WTC11 (cell line): ENCODE measurements at regions of chr12 and their contacts with region 1.

Region 1: DNA sequence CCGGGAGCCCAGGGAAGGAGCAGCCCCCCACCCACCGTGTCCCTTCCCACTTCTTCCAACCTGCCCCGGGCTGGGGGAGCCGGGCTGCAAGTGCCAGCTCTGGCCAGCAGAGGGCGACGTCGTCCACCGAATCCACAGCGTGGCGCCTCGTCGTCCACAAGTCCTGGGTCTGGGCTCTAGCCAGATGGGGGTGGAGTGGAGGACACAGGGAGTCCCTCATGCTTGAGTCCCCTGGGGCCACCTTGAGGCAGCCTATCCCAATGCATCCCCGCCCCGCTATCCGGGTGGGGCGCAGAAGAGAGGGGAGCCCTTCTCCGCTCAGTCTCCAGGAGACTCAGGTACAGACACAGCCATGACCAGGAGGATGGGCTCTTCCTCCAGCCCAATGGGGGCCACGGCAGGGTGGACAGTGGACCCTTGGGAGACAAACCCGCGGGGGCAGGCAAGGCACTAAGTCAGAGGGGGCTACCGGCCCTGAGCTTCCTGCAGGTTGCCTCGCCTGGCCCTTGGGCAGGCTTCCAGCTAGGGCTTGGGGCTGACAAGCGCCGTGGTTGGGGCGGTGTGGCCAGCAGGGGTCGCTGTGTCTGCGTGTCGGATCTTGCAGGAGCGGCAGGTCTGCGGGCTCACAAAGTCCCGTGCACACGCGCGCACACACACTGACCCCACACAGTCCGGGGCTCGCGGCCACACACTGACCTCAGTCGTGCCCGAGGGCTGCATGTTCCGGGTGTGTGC is 5.5 kb downstream of the AQP5 start:
- DNase-seq: peak; percentile 95
- ATAC-seq: peak; percentile 76
- H3K4me3 Mint-ChIP-seq: peak overlapping the region; percentile 59
- H3K27ac Mint-ChIP-seq: no peak overlapping the region
- H3K4me1 Mint-ChIP-seq: peaks cover 10% of the 10 kb centered on the region
- H3K27me3 Mint-ChIP-seq: peaks cover 33% of the 10 kb centered on the region
- CTCF ChIP-seq: peak; percentile 91

Region 2: GRCh38 chr12:49730050-49730449 is 237.2 kb before region 1 on chr12:
- CTCF ChIA-PET with region 1: no interaction called
- POLR2A ChIA-PET with region 1: no interaction called
- DNase-seq: no peak
- ATAC-seq: no peak
- H3K4me3 Mint-ChIP-seq: no peak overlapping the region
- H3K27ac Mint-ChIP-seq: no peak overlapping the region
- H3K4me1 Mint-ChIP-seq: no peaks in the 10 kb centered on the region
- H3K27me3 Mint-ChIP-seq: peaks cover 15% of the 10 kb centered on the region
- CTCF ChIP-seq: no peak

Region 3: GRCh38 chr12:49882851-49883470 is 84.2 kb before region 1 on chr12:
- CTCF ChIA-PET with region 1: interaction called, 16 read pairs
- POLR2A ChIA-PET with region 1: no interaction called
- DNase-seq: peak; percentile 46
- ATAC-seq: peak; percentile 70
- H3K4me3 Mint-ChIP-seq: no peak overlapping the region
- H3K27ac Mint-ChIP-seq: no peak overlapping the region
- H3K4me1 Mint-ChIP-seq: peaks cover 43% of the 10 kb centered on the region
- H3K27me3 Mint-ChIP-seq: no peaks in the 10 kb centered on the region
- CTCF ChIP-seq: no peak

Region 4: GRCh38 chr12:49945394-49946080 is 21.7 kb before region 1 on chr12:
- CTCF ChIA-PET with region 1: interaction called, 168 read pairs
- POLR2A ChIA-PET with region 1: no interaction called
- DNase-seq: peak; percentile 90
- ATAC-seq: peak; percentile 95
- H3K4me3 Mint-ChIP-seq: peak overlapping the region; percentile 61
- H3K27ac Mint-ChIP-seq: 0 out of 2 replicates have a peak overlapping the region, but pooled peaks have one; percentile 18
- H3K4me1 Mint-ChIP-seq: peaks cover 40% of the 10 kb centered on the region
- H3K27me3 Mint-ChIP-seq: peaks cover 9% of the 10 kb centered on the region; the same call in 1 of the 2 replicates
- CTCF ChIP-seq: peak; percentile 69

Region 5: DNA sequence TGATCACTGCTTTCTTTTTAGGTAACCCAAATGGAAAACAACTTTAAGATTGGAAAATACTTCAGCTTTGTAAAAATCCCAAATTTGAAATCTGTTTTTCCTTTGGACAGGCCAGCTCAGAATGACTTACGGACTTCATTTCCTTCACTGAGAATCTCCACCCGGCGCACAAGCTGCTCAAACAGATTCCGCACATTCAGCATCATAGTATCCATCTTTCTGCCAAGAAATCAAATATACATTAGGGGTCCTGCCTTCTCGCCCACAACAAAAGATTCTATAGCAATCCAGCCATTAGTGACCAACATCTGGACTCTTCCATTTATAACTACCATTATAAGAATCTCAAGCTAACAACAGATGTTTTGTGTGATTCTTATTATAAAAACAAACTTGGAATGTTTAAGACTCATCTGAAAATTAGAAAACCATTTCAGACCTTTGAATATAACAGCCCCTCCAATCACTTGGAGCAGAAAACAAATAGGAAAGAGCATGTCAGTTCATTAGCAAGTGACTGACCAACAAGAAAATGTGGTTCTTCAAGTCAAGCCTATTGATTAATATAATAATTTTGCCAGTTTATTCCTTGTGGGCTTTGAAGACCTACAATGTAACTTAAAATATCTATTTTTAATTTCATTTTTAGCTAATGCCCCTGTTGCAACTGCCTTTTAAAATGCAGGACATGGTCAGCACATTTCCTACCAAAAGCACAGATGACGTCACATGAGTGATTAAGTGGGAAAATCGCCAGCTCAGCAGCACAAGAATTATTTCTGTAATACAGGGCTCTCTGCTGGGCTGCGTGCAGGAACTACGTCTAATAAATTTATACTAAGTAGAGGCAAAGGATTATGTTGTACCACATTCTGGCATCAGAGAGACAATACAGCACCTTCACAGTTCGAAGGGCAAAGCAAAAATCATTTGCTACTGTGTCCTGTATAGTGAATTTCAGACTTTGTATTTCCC is 49.6 kb after region 1 on chr12:
- CTCF ChIA-PET with region 1: interaction called, 19 read pairs
- POLR2A ChIA-PET with region 1: no interaction called
- DNase-seq: no peak
- ATAC-seq: no peak
- H3K4me3 Mint-ChIP-seq: no peak overlapping the region
- H3K27ac Mint-ChIP-seq: no peak overlapping the region
- H3K4me1 Mint-ChIP-seq: peaks cover 13% of the 10 kb centered on the region
- H3K27me3 Mint-ChIP-seq: no peaks in the 10 kb centered on the region
- CTCF ChIP-seq: no peak

Region 6: GRCh38 chr12:50050410-50051098 is 83.3 kb after region 1 on chr12:
- CTCF ChIA-PET with region 1: interaction called, 114 read pairs
- POLR2A ChIA-PET with region 1: interaction called, 7 read pairs
- DNase-seq: peak; percentile 65
- ATAC-seq: peak; percentile 52
- H3K4me3 Mint-ChIP-seq: peak overlapping the region; percentile 68
- H3K27ac Mint-ChIP-seq: no peak overlapping the region
- H3K4me1 Mint-ChIP-seq: peaks cover 16% of the 10 kb centered on the region
- H3K27me3 Mint-ChIP-seq: peaks cover 85% of the 10 kb centered on the region
- CTCF ChIP-seq: no peak

Region 7: GRCh38 chr12:50111693-50112455 is 144.7 kb after region 1 on chr12 and contains the start of gene COX14:
- CTCF ChIA-PET with region 1: interaction called, 49 read pairs
- POLR2A ChIA-PET with region 1: no interaction called
- DNase-seq: peak; percentile 99
- ATAC-seq: peak; percentile 88
- H3K4me3 Mint-ChIP-seq: peak within 1 kb of the TSS; percentile 99
- H3K27ac Mint-ChIP-seq: peak within 1 kb of the TSS; percentile 99
- H3K4me1 Mint-ChIP-seq: peaks cover 19% of the 10 kb centered on the region
- H3K27me3 Mint-ChIP-seq: no peaks in the 10 kb centered on the region
- CTCF ChIP-seq: peak; percentile 70
- total RNA-seq, gene COX14: 34.0 to 41.4 TPM (median 40.4 TPM) in 3 replicates

Region 8: DNA sequence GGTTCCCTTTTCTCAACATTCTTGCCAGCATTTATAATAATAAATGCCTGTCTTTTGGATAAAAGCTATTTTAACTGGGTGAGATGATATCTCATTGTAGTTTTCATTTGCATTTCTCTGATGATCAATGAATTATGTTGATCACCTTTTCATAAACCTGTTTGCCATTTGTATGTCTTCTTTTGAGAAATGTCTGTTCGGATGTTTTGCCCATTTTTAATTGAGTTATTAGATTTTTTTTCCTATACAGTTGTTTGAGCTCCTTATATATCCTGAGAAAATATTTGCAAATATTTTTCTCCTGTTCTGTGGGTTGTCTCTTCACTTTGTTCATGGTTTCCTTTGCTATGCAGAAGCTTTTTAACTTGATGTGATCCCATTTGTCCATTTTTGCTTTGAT is 324.2 kb after region 1 on chr12:
- CTCF ChIA-PET with region 1: no interaction called
- POLR2A ChIA-PET with region 1: no interaction called
- DNase-seq: no peak
- ATAC-seq: no peak
- H3K4me3 Mint-ChIP-seq: no peak overlapping the region
- H3K27ac Mint-ChIP-seq: no peak overlapping the region
- H3K4me1 Mint-ChIP-seq: no peaks in the 10 kb centered on the region
- H3K27me3 Mint-ChIP-seq: no peaks in the 10 kb centered on the region
- CTCF ChIP-seq: no peak

Region 9: GRCh38 chr12:50308593-50308992 is 341.4 kb after region 1 on chr12:
- CTCF ChIA-PET with region 1: no interaction called
- POLR2A ChIA-PET with region 1: no interaction called
- DNase-seq: no peak
- ATAC-seq: no peak
- H3K4me3 Mint-ChIP-seq: no peak overlapping the region
- H3K27ac Mint-ChIP-seq: no peak overlapping the region
- H3K4me1 Mint-ChIP-seq: peaks cover 12% of the 10 kb centered on the region
- H3K27me3 Mint-ChIP-seq: no peaks in the 10 kb centered on the region
- CTCF ChIP-seq: no peak